Astrocyte of the cerebellum (primary cell): ENCODE measurements at regions of chr3 and their contacts with region 1.

Region 1: GRCh38 chr3:16168211-16168610 is 6.3 kb upstream of the GALNT15 start:
- DNase-seq: no peak
- H3K4me3 ChIP-seq: no peak overlapping the region
- CTCF ChIP-seq: no peak

Region 2: GRCh38 chr3:16071239-16071638 is 97.0 kb before region 1 on chr3:
- in situ Hi-C with region 1: loop called (anchors 5 kb)
- DNase-seq: no peak
- H3K4me3 ChIP-seq: no peak overlapping the region
- CTCF ChIP-seq: no peak

Region 3: DNA sequence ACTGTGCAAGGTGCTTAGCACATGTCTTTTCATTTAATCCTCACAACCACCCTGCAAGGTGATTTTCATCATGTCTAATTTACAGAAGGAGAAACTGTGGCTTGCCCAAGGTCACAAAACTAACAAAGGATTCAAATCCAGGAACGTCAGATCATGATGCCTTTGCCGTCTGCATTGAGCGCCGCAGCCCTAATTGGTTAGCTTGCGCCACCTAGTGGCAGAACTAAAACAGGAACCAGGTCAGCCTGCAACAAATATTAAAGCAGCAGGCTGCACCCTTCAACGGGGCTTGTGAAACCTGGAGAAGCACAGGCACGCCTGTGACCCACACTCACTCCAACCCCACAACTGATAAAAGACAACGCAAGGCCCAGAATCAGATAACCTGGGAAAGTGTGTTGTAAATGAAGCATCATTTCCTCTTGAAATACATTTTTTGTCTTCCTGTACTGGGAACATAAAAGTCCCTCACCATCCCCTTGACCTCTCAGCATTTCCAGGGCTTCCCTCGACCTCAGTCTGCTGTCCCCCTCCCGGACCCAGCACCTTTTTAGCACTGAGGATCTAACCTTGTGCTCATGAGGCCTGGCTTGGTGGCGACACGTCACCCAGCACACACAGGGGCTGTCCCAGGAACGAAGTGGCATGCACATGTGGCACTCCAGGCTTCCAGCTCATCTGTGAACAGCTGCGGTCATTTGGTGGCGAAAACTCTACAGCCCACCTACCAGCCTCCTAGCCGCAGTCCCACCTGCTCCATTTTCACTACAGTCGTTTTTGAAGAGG is 79.3 kb after region 1 on chr3:
- in situ Hi-C with region 1: no loop called
- DNase-seq: peak; percentile 73
- H3K4me3 ChIP-seq: no peak overlapping the region
- CTCF ChIP-seq: peak; percentile 84